ENCODE measurements at regions of chr18 and their contacts with region 1.

Region 1: DNA sequence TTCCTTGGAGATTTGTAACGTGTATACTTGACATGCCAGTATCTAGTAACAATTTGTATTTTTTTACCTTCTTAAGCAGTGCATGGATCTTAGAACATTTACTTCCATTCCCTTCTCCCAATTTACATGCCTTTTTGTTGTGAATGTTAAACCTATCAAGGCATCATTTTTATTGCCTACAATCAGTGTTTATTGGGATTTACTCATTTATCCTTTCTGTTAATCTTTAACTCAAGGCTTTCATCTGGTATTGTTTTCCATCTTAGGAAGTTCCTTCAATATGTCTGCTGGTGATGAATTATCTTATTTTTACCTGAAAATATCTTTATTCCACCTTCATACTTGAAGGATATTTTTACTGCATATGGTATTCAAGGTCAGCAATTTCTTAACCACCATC is 88.5 kb upstream of the EMILIN2 start:
- DNase-seq: no peak
- ATAC-seq: no peak
- H3K4me3 ChIP-seq: no peak overlapping the region
- H3K4me3 Mint-ChIP-seq: no peak overlapping the region
- H3K27ac ChIP-seq: no peak overlapping the region
- H3K27ac Mint-ChIP-seq: peak overlapping the region; percentile 32 to 40
- H3K4me1 ChIP-seq: no peaks in the 10 kb centered on the region
- H3K4me1 Mint-ChIP-seq: peaks cover 12 to 31% (median 28%) of the 10 kb centered on the region in 3 donors
- H3K27me3 ChIP-seq: no peaks in the 10 kb centered on the region
- H3K27me3 Mint-ChIP-seq: no peaks in the 10 kb centered on the region

Region 2: DNA sequence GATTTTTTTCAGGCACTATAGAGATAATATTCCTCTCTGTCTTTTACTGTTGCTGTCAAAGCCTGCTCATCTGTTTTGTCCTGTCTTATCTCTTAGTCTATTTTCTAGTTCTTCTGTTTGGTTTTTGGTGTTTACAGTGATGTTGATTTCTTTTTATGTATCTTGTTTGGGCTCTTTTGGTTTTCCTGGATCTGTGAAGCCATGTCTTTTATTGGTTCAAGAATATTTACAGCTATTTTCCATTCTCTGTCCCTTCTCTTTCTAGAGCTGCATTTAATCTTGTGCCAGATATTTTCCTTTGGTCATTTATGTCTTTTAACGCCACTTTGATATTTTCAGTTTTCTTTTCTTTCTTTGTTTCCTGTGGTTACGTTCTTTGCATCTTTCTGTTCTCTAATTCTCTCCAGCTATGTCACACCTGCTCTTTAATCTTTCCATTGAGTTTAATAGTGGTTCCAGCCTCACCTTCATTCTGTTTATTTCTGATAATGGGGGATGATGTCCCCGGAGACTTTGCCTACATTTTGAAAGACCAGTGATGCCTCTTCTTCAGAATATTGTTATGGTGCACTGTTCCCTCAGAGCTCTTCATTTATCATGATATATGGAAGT is 70.8 kb before region 1 on chr18:
- CTCF ChIA-PET with region 1: no interaction called
- POLR2A ChIA-PET with region 1: interaction called, 8 to 12 read pairs
- DNase-seq: no peak
- ATAC-seq: no peak
- H3K4me3 ChIP-seq: no peak overlapping the region
- H3K4me3 Mint-ChIP-seq: peak overlapping the region in 2 of 3 donors; percentile 35 to 38
- H3K27ac ChIP-seq: peak overlapping the region; percentile 11
- H3K27ac Mint-ChIP-seq: peak overlapping the region; percentile 68 to 85
- H3K4me1 ChIP-seq: peaks cover 3 to 5% of the 10 kb centered on the region in 2 experiments
- H3K4me1 Mint-ChIP-seq: peaks cover 66 to 72% (median 66%) of the 10 kb centered on the region in 3 donors
- H3K27me3 ChIP-seq: no peaks in the 10 kb centered on the region
- H3K27me3 Mint-ChIP-seq: no peaks in the 10 kb centered on the region

Measured in T-cell (primary cell).